ENCODE measurements at regions of chr6 and their contacts with region 1.

Region 1: GRCh38 chr6:110815217-110816109 is at the start of gene CDK19:
- DNase-seq: peak; percentile 94 to 99 (median 99)
- ATAC-seq: peak; percentile 87
- H3K4me3 ChIP-seq: peak within 1 kb of the TSS; percentile 97
- H3K4me3 Mint-ChIP-seq: peak within 1 kb of the TSS; percentile 94 to 100 (median 98)
- H3K27ac ChIP-seq: peak within 1 kb of the TSS; percentile 89
- H3K27ac Mint-ChIP-seq: peak within 1 kb of the TSS; percentile 89 to 100 (median 99)
- H3K4me1 ChIP-seq: peaks cover 11 to 15% of the 10 kb centered on the region in 2 donors
- H3K4me1 Mint-ChIP-seq: peaks cover 14 to 46% (median 26%) of the 10 kb centered on the region in 7 donors
- H3K27me3 ChIP-seq: no peaks in the 10 kb centered on the region
- H3K27me3 Mint-ChIP-seq: no peaks in the 10 kb centered on the region
- total RNA-seq, gene CDK19: 11.3 to 24.4 (median 21.0) TPM

Region 2: DNA sequence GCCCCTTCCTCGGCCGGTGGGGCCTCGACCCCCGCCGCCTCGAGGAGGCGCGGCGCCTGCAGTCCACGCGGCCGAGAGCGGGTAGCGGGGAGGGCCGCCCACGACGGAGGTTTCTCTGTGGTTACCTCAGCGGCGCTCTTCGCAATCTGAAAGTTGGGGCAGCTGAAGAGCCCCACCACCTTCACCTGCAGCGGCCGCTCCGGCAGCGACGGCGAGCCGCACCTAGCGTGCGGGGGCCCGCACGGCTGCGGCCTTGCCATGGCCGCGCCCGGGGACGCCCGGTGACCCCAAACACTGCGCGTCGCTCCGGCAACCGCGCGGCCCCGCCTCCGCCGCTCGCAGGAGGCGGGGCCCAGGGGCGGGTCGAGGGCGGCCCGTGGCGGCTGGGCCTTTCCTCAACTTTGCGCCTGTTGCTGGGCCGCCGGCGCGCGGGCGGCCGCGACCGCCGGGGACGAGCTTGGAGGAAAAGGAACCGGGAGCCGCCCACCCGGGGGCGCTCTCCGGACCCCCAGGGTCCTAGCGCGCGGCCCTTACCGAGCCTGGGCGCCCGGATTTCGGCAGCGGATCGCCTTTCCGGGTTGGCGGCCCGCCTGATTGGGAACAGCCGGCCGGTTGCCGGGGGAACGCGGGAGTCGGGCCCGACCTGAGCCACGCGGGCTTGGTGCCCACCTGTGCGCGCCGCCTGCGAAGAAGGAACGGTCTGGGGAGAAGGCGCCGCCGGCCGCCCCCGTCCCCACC is 1375.0 kb before region 1 on chr6 and contains the starts of genes PPIL6 and SMPD2:
- CTCF ChIA-PET with region 1: no interaction called
- POLR2A ChIA-PET with region 1: no interaction called
- intact Hi-C with region 1: loop called in 1 of 2 experiments (anchors 1 kb)
- DNase-seq: peak; percentile 63 to 85 (median 77)
- ATAC-seq: peak; percentile 91
- H3K4me3 ChIP-seq: peak within 1 kb of the TSS; percentile 65
- H3K4me3 Mint-ChIP-seq: peak within 1 kb of the TSS; percentile 90 to 95 (median 94)
- H3K27ac ChIP-seq: peak within 1 kb of the TSS; percentile 98
- H3K27ac Mint-ChIP-seq: peak within 1 kb of the TSS; percentile 87 to 97 (median 93)
- H3K4me1 ChIP-seq: peaks cover 11% of the 10 kb centered on the region in 2 donors
- H3K4me1 Mint-ChIP-seq: peaks cover 10 to 32% (median 21%) of the 10 kb centered on the region in 7 donors
- H3K27me3 ChIP-seq: no peaks in the 10 kb centered on the region
- H3K27me3 Mint-ChIP-seq: peaks cover 0 to 2% (median 0%) of the 10 kb centered on the region in 5 donors
- total RNA-seq, gene PPIL6: 0.13 to 1.9 (median 0.40) TPM in 4 of 5 experiments, not detected in the other
- total RNA-seq, gene SMPD2: 16.9 to 33.7 (median 19.6) TPM

Region 3: GRCh38 chr6:110013386-110013785 is 802.1 kb before region 1 on chr6:
- CTCF ChIA-PET with region 1: no interaction called
- POLR2A ChIA-PET with region 1: no interaction called
- intact Hi-C with region 1: no loop called
- DNase-seq: no peak
- ATAC-seq: no peak
- H3K4me3 ChIP-seq: no peak overlapping the region
- H3K4me3 Mint-ChIP-seq: no peak overlapping the region
- H3K27ac ChIP-seq: no peak overlapping the region
- H3K27ac Mint-ChIP-seq: peak overlapping the region in 1 of 9 donors; percentile 2
- H3K4me1 ChIP-seq: no peaks in the 10 kb centered on the region
- H3K4me1 Mint-ChIP-seq: peaks cover 0 to 6% (median 5%) of the 10 kb centered on the region in 7 donors
- H3K27me3 ChIP-seq: no peaks in the 10 kb centered on the region
- H3K27me3 Mint-ChIP-seq: peaks cover 0 to 15% (median 4%) of the 10 kb centered on the region in 5 donors

Region 4: GRCh38 chr6:110682460-110682853 is 133.0 kb before region 1 on chr6:
- CTCF ChIA-PET with region 1: interaction called, 10 read pairs
- POLR2A ChIA-PET with region 1: interaction called, 15 read pairs
- intact Hi-C with region 1: loop called (anchors 1 to 2 kb)
- DNase-seq: peak in 8 of 9 donors; percentile 42 to 84 (median 76)
- ATAC-seq: peak; percentile 99
- H3K4me3 ChIP-seq: no peak overlapping the region
- H3K4me3 Mint-ChIP-seq: no peak overlapping the region
- H3K27ac ChIP-seq: no peak overlapping the region
- H3K27ac Mint-ChIP-seq: peak overlapping the region in 4 of 9 donors; percentile 23 to 55 (median 44)
- H3K4me1 ChIP-seq: peaks cover 5 to 8% of the 10 kb centered on the region in 2 donors
- H3K4me1 Mint-ChIP-seq: peaks cover 5 to 18% (median 11%) of the 10 kb centered on the region in 7 donors
- H3K27me3 ChIP-seq: no peaks in the 10 kb centered on the region
- H3K27me3 Mint-ChIP-seq: no peaks in the 10 kb centered on the region

Region 5: GRCh38 chr6:110944681-110945151 is 129.3 kb after region 1 on chr6:
- CTCF ChIA-PET with region 1: no interaction called
- POLR2A ChIA-PET with region 1: no interaction called
- intact Hi-C with region 1: loop called (anchors 1 to 2 kb)
- DNase-seq: peak in 1 of 9 donors; percentile 49
- ATAC-seq: peak; percentile 96
- H3K4me3 ChIP-seq: no peak overlapping the region
- H3K4me3 Mint-ChIP-seq: no peak overlapping the region
- H3K27ac ChIP-seq: no peak overlapping the region
- H3K27ac Mint-ChIP-seq: peak overlapping the region in 1 of 9 donors; percentile 77
- H3K4me1 ChIP-seq: no peaks in the 10 kb centered on the region
- H3K4me1 Mint-ChIP-seq: peaks cover 0 to 6% (median 0%) of the 10 kb centered on the region in 7 donors
- H3K27me3 ChIP-seq: no peaks in the 10 kb centered on the region
- H3K27me3 Mint-ChIP-seq: no peaks in the 10 kb centered on the region

Region 6: GRCh38 chr6:110958329-110959192 is 143.1 kb after region 1 on chr6 and contains the start of gene GTF3C6:
- CTCF ChIA-PET with region 1: no interaction called
- POLR2A ChIA-PET with region 1: interaction called, 56 read pairs
- intact Hi-C with region 1: loop called (anchors 1 kb)
- DNase-seq: peak; percentile 85 to 94 (median 91)
- ATAC-seq: peak; percentile 99
- H3K4me3 ChIP-seq: peak within 1 kb of the TSS; percentile 86
- H3K4me3 Mint-ChIP-seq: peak within 1 kb of the TSS; percentile 95 to 99 (median 96)
- H3K27ac ChIP-seq: peak within 1 kb of the TSS; percentile 81
- H3K27ac Mint-ChIP-seq: peak within 1 kb of the TSS; percentile 96 to 99 (median 97)
- H3K4me1 ChIP-seq: peaks cover 4% of the 10 kb centered on the region in 2 donors
- H3K4me1 Mint-ChIP-seq: peaks cover 13 to 27% (median 20%) of the 10 kb centered on the region in 7 donors
- H3K27me3 ChIP-seq: no peaks in the 10 kb centered on the region
- H3K27me3 Mint-ChIP-seq: peaks cover 0 to 7% (median 0%) of the 10 kb centered on the region in 5 donors
- total RNA-seq, gene GTF3C6: 18.1 to 100 (median 29.9) TPM

Region 7: DNA sequence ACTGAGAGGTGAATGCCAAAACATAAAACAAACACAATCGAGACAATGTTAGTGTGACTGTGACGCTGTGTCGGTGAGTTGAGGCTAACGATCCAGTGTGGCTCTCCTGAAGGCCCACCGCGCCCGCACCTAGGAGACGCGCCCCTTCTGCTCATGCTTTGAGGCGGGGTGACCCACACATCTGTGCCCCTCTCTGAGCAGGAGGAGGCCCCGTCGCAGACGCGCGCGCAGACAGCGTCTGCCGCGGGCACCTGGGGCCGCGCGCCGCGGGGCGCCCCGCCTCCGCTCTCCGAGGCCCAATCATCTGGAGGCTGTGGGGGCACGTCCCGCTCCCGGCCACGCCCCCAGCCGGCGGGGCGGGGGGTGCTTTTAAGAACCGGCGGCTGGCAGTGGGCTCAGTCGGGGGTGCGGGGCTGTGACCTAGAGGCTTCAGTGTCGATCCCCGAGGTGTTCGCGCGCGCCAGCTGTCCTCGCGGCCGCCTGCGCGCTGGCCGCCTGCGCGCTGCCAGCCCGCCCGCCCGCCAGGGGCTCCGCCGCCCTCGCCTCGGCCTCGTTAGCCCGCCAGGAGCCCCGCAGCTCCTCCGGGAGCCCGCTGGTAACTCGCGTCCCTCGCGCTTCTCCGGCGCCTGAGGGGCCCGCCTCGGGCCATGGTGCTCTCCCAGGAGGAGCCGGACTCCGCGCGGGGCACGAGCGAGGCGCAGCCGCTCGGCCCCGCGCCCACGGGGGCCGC is 271.8 kb after region 1 on chr6 and contains the start of gene SLC16A10:
- CTCF ChIA-PET with region 1: no interaction called
- POLR2A ChIA-PET with region 1: interaction called, 4 read pairs
- intact Hi-C with region 1: loop called in 1 of 2 experiments (anchors 1 kb)
- DNase-seq: peak; percentile 75 to 92 (median 90)
- ATAC-seq: peak; percentile 95
- H3K4me3 ChIP-seq: peak within 1 kb of the TSS; percentile 83
- H3K4me3 Mint-ChIP-seq: peak within 1 kb of the TSS; percentile 85 to 100 (median 97)
- H3K27ac ChIP-seq: peak within 1 kb of the TSS; percentile 80
- H3K27ac Mint-ChIP-seq: peak within 1 kb of the TSS; percentile 54 to 99 (median 96)
- H3K4me1 ChIP-seq: peaks cover 10 to 17% of the 10 kb centered on the region in 2 donors
- H3K4me1 Mint-ChIP-seq: peaks cover 20 to 54% (median 48%) of the 10 kb centered on the region in 7 donors
- H3K27me3 ChIP-seq: no peaks in the 10 kb centered on the region
- H3K27me3 Mint-ChIP-seq: peaks cover 0 to 24% (median 0%) of the 10 kb centered on the region in 5 donors
- total RNA-seq, gene SLC16A10: 1.6 to 27.7 (median 16.7) TPM

Measured in naive thymus-derived CD4-positive, alpha-beta T cell (primary cell).